SK-N-SH (cell line): ENCODE measurements at regions of chr15 and their contacts with region 1.

Region 1: GRCh38 chr15:74322181-74323076 is 45.0 kb downstream of the CYP11A1 start:
- DNase-seq: peak; percentile 88
- H3K4me3 ChIP-seq: no peak overlapping the region
- H3K27ac ChIP-seq: 0 out of 4 replicates have a peak overlapping the region, but pooled peaks of 1 of the 2 experiments have one; percentile 11
- H3K4me1 ChIP-seq: peaks cover 10 to 39% of the 10 kb centered on the region in 2 experiments; a peak in 3 of 4 replicates
- H3K27me3 ChIP-seq: no peaks in the 10 kb centered on the region
- CTCF ChIP-seq: peak; percentile 88
- EP300 ChIP-seq: no peak
- RAD21 ChIP-seq: peak; percentile 97

Region 2: DNA sequence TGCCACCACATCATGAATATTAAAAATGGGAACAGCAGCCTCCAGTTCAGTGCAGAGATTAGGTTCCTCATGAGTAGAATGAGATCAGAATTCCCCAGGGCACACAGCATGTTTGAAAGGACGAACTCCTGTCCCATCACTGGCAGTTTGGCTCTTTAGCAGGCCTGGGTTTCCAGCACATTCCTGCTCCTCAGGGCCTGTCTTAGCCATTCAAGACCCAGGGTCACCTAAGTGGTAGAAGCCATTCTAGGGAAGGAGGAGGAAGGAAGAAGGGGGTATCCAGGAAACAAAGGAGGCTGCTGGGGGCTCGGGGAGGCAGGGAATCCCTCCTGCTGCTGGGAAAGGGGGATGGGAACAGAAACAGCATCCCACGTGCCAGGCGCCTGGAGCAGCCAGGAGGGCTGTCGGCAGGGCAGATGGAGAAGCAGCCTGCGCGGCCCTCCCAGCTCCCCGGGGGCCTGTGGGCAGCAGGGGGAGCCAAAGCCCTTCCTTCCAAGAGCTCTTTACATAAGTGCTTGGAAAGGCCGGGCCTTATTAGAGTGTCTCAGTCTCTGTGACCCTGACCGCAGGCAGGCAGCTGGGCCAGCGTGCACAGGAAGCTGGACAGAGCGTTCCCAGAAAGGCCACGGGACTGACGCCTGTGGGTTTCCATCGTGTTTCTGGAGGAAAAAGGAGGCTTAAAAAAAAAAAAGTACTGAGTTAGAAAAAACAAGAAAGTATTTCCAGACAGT is 371.4 kb before region 1 on chr15:
- CTCF ChIA-PET with region 1: interaction called, 11 read pairs
- POLR2A ChIA-PET with region 1: no interaction called
- DNase-seq: peak; percentile 96
- H3K4me3 ChIP-seq: no peak overlapping the region
- H3K27ac ChIP-seq: peak overlapping the region; percentile 75 to 92
- H3K4me1 ChIP-seq: peaks cover 20 to 38% of the 10 kb centered on the region in 2 experiments
- H3K27me3 ChIP-seq: no peaks in the 10 kb centered on the region
- CTCF ChIP-seq: peak; percentile 87
- EP300 ChIP-seq: peak in 1 of 2 experiments; percentile 55; a peak in 2 of 4 replicates
- RAD21 ChIP-seq: peak; percentile 93

Region 3: GRCh38 chr15:73972984-73973682 is 349.3 kb before region 1 on chr15:
- CTCF ChIA-PET with region 1: interaction called, 64 read pairs
- POLR2A ChIA-PET with region 1: no interaction called
- DNase-seq: peak; percentile 93
- H3K4me3 ChIP-seq: peak overlapping the region in 1 of 2 experiments; percentile 50; a peak in 1 of 4 replicates
- H3K27ac ChIP-seq: no peak overlapping the region
- H3K4me1 ChIP-seq: peaks cover 8 to 10% of the 10 kb centered on the region in 2 experiments; a peak in 2 of 4 replicates
- H3K27me3 ChIP-seq: no peaks in the 10 kb centered on the region
- CTCF ChIP-seq: peak; percentile 84
- EP300 ChIP-seq: no peak
- RAD21 ChIP-seq: peak; percentile 97

Region 4: DNA sequence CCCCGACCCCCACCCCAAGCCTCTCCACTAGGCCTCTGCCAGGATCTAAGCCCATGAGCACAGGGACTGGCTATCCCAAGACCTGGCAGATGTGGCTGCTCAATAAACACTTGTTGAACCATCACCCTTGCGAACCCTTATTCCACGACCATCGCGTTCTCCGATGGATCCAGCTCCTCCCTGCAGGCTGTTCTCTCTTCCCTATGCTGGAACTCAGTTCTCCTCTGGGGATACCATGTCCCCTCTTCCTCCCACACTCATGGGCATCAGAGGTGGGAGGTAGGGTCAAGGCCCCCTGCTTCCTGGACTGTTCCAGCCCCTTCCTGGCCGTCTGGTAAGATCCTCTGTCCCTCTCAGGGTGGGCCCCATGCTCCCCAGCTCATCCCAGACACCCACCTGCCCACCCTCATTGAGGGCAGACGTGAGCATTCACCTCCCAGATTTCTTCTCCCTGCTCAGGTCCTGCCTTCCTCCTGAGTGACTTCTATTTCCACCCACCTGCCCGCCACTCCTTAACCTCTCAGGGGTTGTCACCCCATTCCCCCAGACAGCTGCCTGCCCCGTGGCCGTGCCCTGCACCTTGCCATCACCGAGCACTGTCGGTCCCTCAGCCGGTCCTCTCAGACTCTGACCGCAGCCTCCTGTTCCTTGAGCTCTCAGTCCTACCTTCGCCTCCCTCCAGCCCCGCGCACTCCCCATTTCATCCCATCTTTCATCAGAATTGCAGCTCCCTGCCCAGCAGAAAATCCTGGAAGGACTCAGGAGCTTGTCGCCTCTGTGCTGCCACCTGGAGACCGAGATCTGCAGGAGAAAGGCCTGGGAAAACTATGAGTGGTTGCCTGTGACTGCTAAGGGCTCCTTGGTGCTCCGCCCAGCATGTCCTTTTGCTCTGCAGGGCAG is 285.9 kb before region 1 on chr15:
- CTCF ChIA-PET with region 1: interaction called, 13 read pairs
- POLR2A ChIA-PET with region 1: no interaction called
- DNase-seq: peak; percentile 76
- H3K4me3 ChIP-seq: no peak overlapping the region; a peak in 1 of 4 replicates
- H3K27ac ChIP-seq: no peak overlapping the region
- H3K4me1 ChIP-seq: peaks cover 8 to 22% of the 10 kb centered on the region in 2 experiments; a peak in 2 of 4 replicates
- H3K27me3 ChIP-seq: no peaks in the 10 kb centered on the region
- CTCF ChIP-seq: peak; percentile 64
- EP300 ChIP-seq: no peak
- RAD21 ChIP-seq: peak; percentile 55

Region 5: DNA sequence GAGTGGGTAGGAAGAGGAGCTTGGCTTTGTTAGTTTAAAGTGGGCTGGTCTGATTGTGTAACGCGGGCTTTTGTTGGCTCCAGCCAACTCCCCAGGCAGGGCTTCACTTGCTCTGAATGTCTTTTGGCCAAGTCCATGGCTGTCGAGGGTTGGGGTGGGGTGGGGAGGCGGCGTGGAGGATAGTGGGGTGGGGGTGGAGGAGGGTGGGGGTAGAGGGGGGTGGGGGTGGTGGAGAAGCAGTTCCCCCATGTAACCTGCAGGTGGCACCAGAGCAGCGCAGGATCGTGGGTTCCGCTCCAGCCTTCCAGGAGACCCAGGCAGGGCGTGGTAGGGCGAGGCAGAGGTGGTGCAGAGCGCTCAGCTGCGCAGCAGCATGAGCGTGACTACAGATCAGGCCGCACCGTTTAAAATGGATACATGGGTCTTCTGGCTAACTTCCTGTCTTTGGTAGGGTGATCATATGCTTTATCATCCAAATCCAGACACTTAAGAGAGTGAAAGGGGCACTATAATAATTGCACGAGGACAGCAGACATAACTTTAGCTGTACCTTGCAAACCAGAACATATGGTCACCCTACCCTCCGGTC is 268.4 kb before region 1 on chr15:
- CTCF ChIA-PET with region 1: interaction called, 339 read pairs
- POLR2A ChIA-PET with region 1: no interaction called
- DNase-seq: peak; percentile 94
- H3K4me3 ChIP-seq: peak overlapping the region in 1 of 2 experiments; percentile 8; a peak in 1 of 4 replicates
- H3K27ac ChIP-seq: peak overlapping the region in 1 of 2 experiments; percentile 35; a peak in 2 of 4 replicates
- H3K4me1 ChIP-seq: peaks cover 15 to 18% of the 10 kb centered on the region in 2 experiments; a peak in 3 of 4 replicates
- H3K27me3 ChIP-seq: no peaks in the 10 kb centered on the region
- CTCF ChIP-seq: peak; percentile 56
- EP300 ChIP-seq: no peak
- RAD21 ChIP-seq: peak; percentile 80

Region 6: DNA sequence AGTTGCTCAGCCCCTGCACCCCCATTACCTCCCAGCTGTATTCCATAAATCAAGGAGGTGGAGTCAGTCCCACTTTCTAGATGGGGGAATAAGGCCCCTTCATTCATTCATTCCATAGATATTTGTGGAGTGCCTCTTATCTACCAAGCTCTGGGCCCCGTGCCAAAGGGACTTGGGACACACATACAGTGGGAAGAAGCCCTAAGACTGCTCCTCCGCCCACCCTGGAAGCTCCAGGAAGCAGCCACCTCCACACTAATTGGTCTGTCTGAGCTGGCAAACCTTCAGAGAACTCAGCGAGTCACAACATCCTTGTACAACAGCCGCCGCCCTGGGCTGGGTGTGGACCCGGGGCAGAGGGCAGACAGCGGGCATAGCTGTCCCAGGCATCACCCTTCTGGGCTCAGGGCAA is 126.2 kb before region 1 on chr15:
- CTCF ChIA-PET with region 1: interaction called, 10 read pairs
- POLR2A ChIA-PET with region 1: no interaction called
- DNase-seq: no peak
- H3K4me3 ChIP-seq: no peak overlapping the region
- H3K27ac ChIP-seq: peak overlapping the region; percentile 69 to 89
- H3K4me1 ChIP-seq: peaks cover 59 to 86% of the 10 kb centered on the region in 2 experiments
- H3K27me3 ChIP-seq: no peaks in the 10 kb centered on the region
- CTCF ChIP-seq: no peak
- EP300 ChIP-seq: no peak
- RAD21 ChIP-seq: no peak

Region 7: DNA sequence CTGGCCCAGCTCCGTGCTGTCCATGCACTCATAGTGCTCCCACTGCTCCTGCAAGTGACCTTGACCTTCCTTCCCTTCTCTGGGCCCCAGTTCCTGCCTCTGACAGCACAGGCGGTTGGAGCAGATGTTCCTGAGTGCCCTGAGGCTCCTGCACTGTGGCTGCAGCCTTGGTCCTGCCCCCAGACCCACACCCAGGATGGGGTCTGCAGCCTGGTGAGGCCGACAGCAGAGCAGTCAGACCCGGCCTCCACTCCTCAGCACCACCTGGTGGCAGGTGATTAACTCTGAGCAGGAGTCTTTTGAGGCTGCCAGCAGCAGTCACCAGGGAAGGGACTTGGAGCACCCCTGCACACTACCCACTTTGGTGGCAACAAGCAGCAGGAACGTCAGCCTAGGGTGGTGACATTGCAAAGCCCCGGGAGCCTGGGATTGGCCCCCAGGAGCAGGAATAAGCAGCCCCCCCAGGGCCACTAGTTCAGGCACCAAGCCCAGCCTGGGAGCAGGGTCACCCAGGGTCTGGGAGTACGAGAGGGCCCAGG is 19.5 kb before region 1 on chr15:
- CTCF ChIA-PET with region 1: interaction called, 265 read pairs
- POLR2A ChIA-PET with region 1: interaction called, 3 read pairs
- DNase-seq: peak; percentile 93
- H3K4me3 ChIP-seq: no peak overlapping the region; a peak in 1 of 4 replicates
- H3K27ac ChIP-seq: peak overlapping the region in 1 of 2 experiments; percentile 95; a peak in 2 of 4 replicates
- H3K4me1 ChIP-seq: peaks cover 0 to 50% of the 10 kb centered on the region in 2 experiments; a peak in 2 of 4 replicates
- H3K27me3 ChIP-seq: no peaks in the 10 kb centered on the region
- CTCF ChIP-seq: peak; percentile 77
- EP300 ChIP-seq: peak in 1 of 2 experiments; percentile 90; a peak in 2 of 4 replicates
- RAD21 ChIP-seq: peak; percentile 87

Region 8: DNA sequence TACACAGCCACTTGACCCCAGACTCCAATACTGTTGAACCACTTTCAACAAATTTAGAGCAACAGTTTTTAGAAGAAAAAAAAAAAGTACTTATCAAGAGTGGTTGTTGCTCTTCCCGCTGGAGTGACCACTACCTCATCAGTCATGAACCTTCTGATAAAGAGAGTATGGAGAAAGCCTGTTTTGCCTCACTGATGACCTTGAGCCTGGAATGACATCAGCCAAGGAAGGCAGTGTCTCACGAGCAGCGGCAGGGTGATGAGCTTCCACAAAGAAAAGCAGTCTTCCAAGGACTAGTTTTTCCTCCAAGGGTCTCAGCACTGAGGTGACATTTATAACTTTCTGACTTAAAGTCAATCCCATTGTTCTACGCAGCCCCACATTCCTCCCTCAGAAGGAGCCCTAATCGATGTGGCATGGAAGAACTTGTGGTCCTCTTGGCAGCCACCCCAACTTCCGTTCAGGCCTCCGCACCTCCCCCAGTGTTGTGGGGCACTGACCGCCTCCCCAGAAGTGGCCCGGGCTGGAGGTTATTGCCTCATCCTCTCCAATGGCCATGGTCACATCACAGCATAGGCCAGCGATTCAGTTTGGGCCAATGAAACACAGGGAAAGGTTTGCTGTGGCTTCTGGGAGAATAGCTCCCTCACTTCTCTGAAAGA is 46.8 kb after region 1 on chr15:
- CTCF ChIA-PET with region 1: no interaction called
- POLR2A ChIA-PET with region 1: no interaction called
- DNase-seq: no peak
- H3K4me3 ChIP-seq: no peak overlapping the region
- H3K27ac ChIP-seq: no peak overlapping the region
- H3K4me1 ChIP-seq: peaks cover 0 to 4% of the 10 kb centered on the region in 2 experiments; a peak in 1 of 4 replicates
- H3K27me3 ChIP-seq: peaks cover 30% of the 10 kb centered on the region
- CTCF ChIP-seq: no peak
- EP300 ChIP-seq: no peak
- RAD21 ChIP-seq: no peak

Region 9: DNA sequence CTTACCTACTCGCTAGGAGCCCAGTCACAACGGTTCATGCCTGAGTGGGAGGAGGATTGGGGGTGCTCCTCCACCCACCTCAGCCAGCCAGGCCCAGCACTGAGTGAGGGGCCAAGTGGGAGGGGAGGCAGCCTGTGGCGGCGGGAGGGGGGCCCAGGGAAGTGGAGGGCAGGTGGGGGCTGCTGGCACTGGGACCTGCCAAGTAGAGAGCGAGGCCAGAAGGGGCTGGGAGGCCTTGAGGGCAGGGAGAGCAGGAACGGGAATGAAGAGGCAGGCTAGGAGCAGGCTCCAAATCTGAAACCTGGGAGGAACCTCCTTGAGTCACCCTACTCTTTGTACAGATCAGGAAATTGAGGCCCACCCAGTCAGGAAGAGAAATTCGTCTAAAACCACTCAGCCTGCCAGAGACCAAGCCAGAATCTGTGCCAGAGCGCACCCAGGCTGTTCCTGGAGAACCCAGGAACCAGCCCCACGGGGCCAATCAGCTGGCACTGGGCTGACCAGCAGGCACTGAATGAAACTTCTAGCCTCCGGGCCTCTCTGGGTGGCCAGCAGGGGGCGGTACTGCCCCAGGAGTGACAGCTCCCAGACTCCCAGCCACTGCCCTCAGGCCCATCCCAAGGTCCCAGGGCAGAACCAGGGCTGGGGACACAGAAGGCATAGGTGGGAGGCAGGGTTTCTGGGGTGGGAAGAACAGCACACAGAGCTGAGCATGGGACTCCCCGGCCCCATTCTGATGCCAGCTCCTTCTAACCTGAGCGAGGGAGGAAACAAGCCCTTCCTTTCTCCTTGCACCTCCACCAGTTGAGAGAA is 59.8 kb after region 1 on chr15:
- CTCF ChIA-PET with region 1: no interaction called
- POLR2A ChIA-PET with region 1: no interaction called
- DNase-seq: peak; percentile 91
- H3K4me3 ChIP-seq: peak overlapping the region in 1 of 2 experiments; percentile 22; a peak in 1 of 4 replicates
- H3K27ac ChIP-seq: no peak overlapping the region
- H3K4me1 ChIP-seq: peaks cover 0 to 14% of the 10 kb centered on the region in 2 experiments; a peak in 1 of 4 replicates
- H3K27me3 ChIP-seq: no peaks in the 10 kb centered on the region
- CTCF ChIP-seq: peak; percentile 95
- EP300 ChIP-seq: no peak
- RAD21 ChIP-seq: peak; percentile 91